Panc1 (cell line): ENCODE measurements at regions of chr16 and their contacts with region 1.

Region 1: GRCh38 chr16:81585785-81586184 is 141.2 kb downstream of the CMIP start:
- DNase-seq: no peak
- ATAC-seq: peak; percentile 48
- H3K4me3 ChIP-seq: no peak overlapping the region; a peak in 1 of 4 replicates
- H3K27ac ChIP-seq: peak overlapping the region; percentile 91
- H3K4me1 ChIP-seq: peaks cover 72% of the 10 kb centered on the region
- H3K27me3 ChIP-seq: no peaks in the 10 kb centered on the region
- CTCF ChIP-seq: peak; percentile 82

Region 2: GRCh38 chr16:81493755-81494433 is 91.9 kb before region 1 on chr16:
- CTCF ChIA-PET with region 1: no interaction called
- POLR2A ChIA-PET with region 1: no interaction called
- in situ Hi-C with region 1: no loop called
- intact Hi-C with region 1: loop called (anchors 10 kb)
- DNase-seq: peak; percentile 55
- ATAC-seq: peak; percentile 80
- H3K4me3 ChIP-seq: no peak overlapping the region; a peak in 1 of 4 replicates
- H3K27ac ChIP-seq: peak overlapping the region; percentile 58
- H3K4me1 ChIP-seq: peaks cover 62% of the 10 kb centered on the region
- H3K27me3 ChIP-seq: no peaks in the 10 kb centered on the region
- CTCF ChIP-seq: no peak

Region 3: GRCh38 chr16:81499576-81500380 is 86.0 kb before region 1 on chr16:
- CTCF ChIA-PET with region 1: no interaction called
- POLR2A ChIA-PET with region 1: interaction called, 12 read pairs
- in situ Hi-C with region 1: no loop called
- intact Hi-C with region 1: loop called (anchors 10 kb)
- DNase-seq: no peak
- ATAC-seq: 0 out of 2 replicates have a peak, but pooled peaks have one; percentile 15
- H3K4me3 ChIP-seq: no peak overlapping the region
- H3K27ac ChIP-seq: peak overlapping the region; percentile 34; the same call in 1 of the 2 replicates
- H3K4me1 ChIP-seq: peaks cover 49% of the 10 kb centered on the region
- H3K27me3 ChIP-seq: no peaks in the 10 kb centered on the region
- CTCF ChIP-seq: no peak

Region 4: GRCh38 chr16:81610144-81610842 is 24.5 kb after region 1 on chr16:
- CTCF ChIA-PET with region 1: no interaction called
- POLR2A ChIA-PET with region 1: no interaction called
- in situ Hi-C with region 1: no loop called
- intact Hi-C with region 1: no loop called
- DNase-seq: no peak
- ATAC-seq: peak; percentile 78
- H3K4me3 ChIP-seq: no peak overlapping the region
- H3K27ac ChIP-seq: no peak overlapping the region
- H3K4me1 ChIP-seq: peaks cover 7% of the 10 kb centered on the region; the same call in 1 of the 2 replicates
- H3K27me3 ChIP-seq: no peaks in the 10 kb centered on the region
- CTCF ChIP-seq: no peak